B cell (primary cell): ENCODE measurements at regions of chr12 and their contacts with region 1.

Region 1: DNA sequence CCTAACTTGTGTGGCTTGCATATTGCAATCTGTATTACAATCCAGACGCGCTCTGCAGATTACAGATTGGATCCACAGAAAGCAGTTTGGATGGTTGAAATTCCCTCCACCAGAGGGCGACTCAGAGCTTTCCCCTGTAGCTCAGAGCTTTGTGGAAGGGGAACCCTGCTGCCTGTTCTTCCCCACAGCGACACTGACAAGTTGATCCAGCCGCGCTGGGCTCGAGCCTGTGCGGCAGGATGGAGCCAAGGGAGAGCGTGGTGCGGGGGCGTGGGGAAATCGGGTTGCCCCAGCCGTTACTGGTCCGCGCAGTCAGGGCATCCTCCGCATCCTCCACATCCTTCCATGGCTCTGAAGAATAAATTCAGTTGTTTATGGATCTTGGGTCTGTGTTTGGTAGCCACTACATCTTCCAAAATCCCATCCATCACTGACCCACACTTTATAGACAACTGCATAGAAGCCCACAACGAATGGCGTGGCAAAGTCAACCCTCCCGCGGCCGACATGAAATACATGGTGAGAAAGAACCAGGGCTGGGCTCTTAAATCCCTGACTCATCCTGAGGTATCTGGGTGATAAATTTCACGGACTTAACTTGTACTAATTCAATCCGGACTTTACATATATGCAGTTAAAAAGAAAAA is at the start of gene GLIPR1L1:
- DNase-seq: peak; percentile 86
- ATAC-seq: peak; percentile 83
- H3K4me3 ChIP-seq: peak within 1 kb of the TSS in 2 of 5 experiments; percentile 33 to 41
- H3K4me3 Mint-ChIP-seq: peak within 1 kb of the TSS; percentile 76
- H3K27ac ChIP-seq: no peak within 1 kb of the TSS
- H3K27ac Mint-ChIP-seq: no peak within 1 kb of the TSS
- H3K4me1 ChIP-seq: peaks cover 16% of the 10 kb centered on the region in 2 donors
- H3K4me1 Mint-ChIP-seq: peaks cover 18% of the 10 kb centered on the region
- H3K27me3 ChIP-seq: peaks cover 0 to 14% (median 6%) of the 10 kb centered on the region in 4 experiments
- H3K27me3 Mint-ChIP-seq: peaks cover 25% of the 10 kb centered on the region
- CTCF ChIP-seq: peak; percentile 93
- total RNA-seq, gene GLIPR1L1: not detected in 2 replicates

Region 2: GRCh38 chr12:75489613-75490210 is 155.2 kb after region 1 on chr12:
- CTCF ChIA-PET with region 1: interaction called, 29 read pairs
- POLR2A ChIA-PET with region 1: no interaction called
- intact Hi-C with region 1: loop called (anchors 5 kb)
- DNase-seq: no peak
- ATAC-seq: peak; percentile 21
- H3K4me3 ChIP-seq: no peak overlapping the region
- H3K4me3 Mint-ChIP-seq: no peak overlapping the region
- H3K27ac ChIP-seq: peak overlapping the region in 1 of 2 donors; percentile 28
- H3K27ac Mint-ChIP-seq: peak overlapping the region; percentile 5
- H3K4me1 ChIP-seq: peaks cover 9 to 16% of the 10 kb centered on the region in 2 donors
- H3K4me1 Mint-ChIP-seq: peaks cover 50% of the 10 kb centered on the region
- H3K27me3 ChIP-seq: no peaks in the 10 kb centered on the region
- H3K27me3 Mint-ChIP-seq: no peaks in the 10 kb centered on the region
- CTCF ChIP-seq: no peak

Region 3: DNA sequence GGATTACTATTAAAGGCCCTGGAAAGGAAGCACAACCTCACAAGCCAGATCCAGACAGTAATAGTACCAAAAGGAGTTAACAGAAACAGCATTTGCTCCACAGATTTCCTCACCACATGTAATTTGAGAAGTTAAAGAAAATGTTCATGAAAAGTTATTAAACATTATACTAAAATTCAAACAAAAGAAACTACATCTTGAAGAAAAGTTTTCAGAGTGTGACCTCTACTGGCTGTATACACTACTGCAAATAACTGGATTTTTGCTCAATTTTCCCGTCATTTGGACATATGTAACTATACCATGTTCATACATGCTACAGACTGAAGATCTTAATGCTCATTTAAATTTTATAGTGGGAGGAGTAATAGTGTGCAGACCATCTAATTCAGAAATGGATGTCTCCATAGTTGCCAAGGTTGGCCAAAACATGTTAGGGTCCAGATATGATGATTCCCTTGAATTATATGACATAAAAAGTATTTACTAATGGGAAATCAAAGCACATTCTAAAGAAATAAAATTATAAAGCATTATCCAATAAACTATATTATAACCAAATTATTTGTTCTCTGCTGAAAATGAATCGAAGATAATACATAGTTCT is 171.3 kb after region 1 on chr12:
- CTCF ChIA-PET with region 1: interaction called, 46 read pairs
- POLR2A ChIA-PET with region 1: interaction called, 5 read pairs
- intact Hi-C with region 1: loop called (anchors 1 kb)
- DNase-seq: peak; percentile 53
- ATAC-seq: peak; percentile 57
- H3K4me3 ChIP-seq: no peak overlapping the region
- H3K4me3 Mint-ChIP-seq: no peak overlapping the region
- H3K27ac ChIP-seq: peak overlapping the region; percentile 4 to 37
- H3K27ac Mint-ChIP-seq: no peak overlapping the region
- H3K4me1 ChIP-seq: peaks cover 5 to 12% of the 10 kb centered on the region in 2 donors
- H3K4me1 Mint-ChIP-seq: peaks cover 18% of the 10 kb centered on the region
- H3K27me3 ChIP-seq: no peaks in the 10 kb centered on the region
- H3K27me3 Mint-ChIP-seq: no peaks in the 10 kb centered on the region
- CTCF ChIP-seq: peak; percentile 82

Region 4: GRCh38 chr12:76037130-76038103 is 702.9 kb after region 1 on chr12:
- CTCF ChIA-PET with region 1: interaction called, 12 read pairs
- POLR2A ChIA-PET with region 1: no interaction called
- intact Hi-C with region 1: loop called (anchors 1 kb)
- DNase-seq: peak; percentile 76
- ATAC-seq: peak; percentile 71
- H3K4me3 ChIP-seq: no peak overlapping the region
- H3K4me3 Mint-ChIP-seq: no peak overlapping the region
- H3K27ac ChIP-seq: no peak overlapping the region
- H3K27ac Mint-ChIP-seq: no peak overlapping the region
- H3K4me1 ChIP-seq: peaks cover 3 to 4% of the 10 kb centered on the region in 2 donors
- H3K4me1 Mint-ChIP-seq: peaks cover 9% of the 10 kb centered on the region
- H3K27me3 ChIP-seq: no peaks in the 10 kb centered on the region
- H3K27me3 Mint-ChIP-seq: no peaks in the 10 kb centered on the region
- CTCF ChIP-seq: peak; percentile 85